ENCODE measurements at regions of chr12 and their contacts with region 1.

Region 1: DNA sequence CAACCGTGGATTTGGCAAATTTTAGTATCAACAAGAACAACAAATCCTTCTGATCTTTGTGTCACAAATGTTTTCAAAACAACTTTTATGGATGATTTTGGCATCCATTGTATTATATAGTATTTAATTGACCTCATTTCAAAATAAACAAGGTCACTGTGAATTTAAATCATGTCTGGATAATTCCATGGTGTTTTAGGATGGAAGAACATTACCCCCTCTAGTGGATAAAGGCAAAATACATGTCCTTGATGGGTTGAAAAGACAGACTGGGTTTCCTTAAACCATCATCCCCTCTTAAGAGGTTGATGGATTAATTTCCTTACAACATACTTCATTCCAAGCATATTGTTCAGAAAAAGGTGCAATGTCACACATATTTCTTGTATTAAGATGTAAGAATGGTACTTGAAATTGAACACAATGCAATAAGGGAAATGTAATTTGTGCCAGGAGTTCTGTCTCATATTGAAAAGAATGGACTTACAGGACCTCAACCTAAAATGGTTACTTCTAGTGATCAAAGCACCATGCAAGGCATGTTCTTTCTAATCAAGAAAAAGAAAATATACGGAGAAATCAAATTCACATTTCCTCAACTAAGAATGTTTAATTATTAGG is 352.0 kb downstream of the BCAT1 start:
- DNase-seq: no peak
- ATAC-seq: no peak
- H3K4me3 ChIP-seq: no peak overlapping the region
- H3K27ac ChIP-seq: no peak overlapping the region
- H3K4me1 ChIP-seq: peaks cover 0 to 2% of the 10 kb centered on the region in 2 donors
- H3K27me3 ChIP-seq: no peaks in the 10 kb centered on the region

Region 2: DNA sequence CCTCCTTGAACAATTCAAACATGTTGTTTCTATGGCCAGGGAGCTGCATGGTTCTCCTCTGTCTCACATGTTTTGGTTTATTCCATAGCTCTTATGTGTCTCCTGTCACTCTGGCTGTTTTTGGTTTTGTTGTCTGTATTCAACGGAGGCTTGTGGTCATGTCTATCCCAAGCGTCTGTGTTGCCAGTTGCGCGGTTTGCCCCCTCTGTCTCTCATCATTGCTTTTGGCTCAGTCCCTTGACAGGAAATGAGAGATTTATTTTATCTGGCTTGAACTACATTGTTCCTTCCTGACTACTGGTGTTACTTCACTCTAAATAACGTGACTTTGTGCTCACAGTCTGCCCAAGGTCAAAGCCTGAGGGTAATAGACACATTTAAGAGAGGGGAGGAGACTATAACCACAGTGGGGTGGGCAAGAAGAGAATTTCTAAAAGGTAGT is 551.0 kb before region 1 on chr12:
- intact Hi-C with region 1: loop called in 1 of 2 experiments (anchors 10 kb)
- DNase-seq: peak in 1 of 2 donors; percentile 45
- ATAC-seq: peak; percentile 79
- H3K4me3 ChIP-seq: no peak overlapping the region
- H3K27ac ChIP-seq: no peak overlapping the region
- H3K4me1 ChIP-seq: peaks cover 0 to 3% of the 10 kb centered on the region in 2 donors
- H3K27me3 ChIP-seq: no peaks in the 10 kb centered on the region

Region 3: GRCh38 chr12:24109381-24110039 is 487.4 kb before region 1 on chr12:
- intact Hi-C with region 1: loop called (anchors 10 kb)
- DNase-seq: no peak
- ATAC-seq: no peak
- H3K4me3 ChIP-seq: no peak overlapping the region
- H3K27ac ChIP-seq: no peak overlapping the region
- H3K4me1 ChIP-seq: no peaks in the 10 kb centered on the region
- H3K27me3 ChIP-seq: no peaks in the 10 kb centered on the region

Region 4: DNA sequence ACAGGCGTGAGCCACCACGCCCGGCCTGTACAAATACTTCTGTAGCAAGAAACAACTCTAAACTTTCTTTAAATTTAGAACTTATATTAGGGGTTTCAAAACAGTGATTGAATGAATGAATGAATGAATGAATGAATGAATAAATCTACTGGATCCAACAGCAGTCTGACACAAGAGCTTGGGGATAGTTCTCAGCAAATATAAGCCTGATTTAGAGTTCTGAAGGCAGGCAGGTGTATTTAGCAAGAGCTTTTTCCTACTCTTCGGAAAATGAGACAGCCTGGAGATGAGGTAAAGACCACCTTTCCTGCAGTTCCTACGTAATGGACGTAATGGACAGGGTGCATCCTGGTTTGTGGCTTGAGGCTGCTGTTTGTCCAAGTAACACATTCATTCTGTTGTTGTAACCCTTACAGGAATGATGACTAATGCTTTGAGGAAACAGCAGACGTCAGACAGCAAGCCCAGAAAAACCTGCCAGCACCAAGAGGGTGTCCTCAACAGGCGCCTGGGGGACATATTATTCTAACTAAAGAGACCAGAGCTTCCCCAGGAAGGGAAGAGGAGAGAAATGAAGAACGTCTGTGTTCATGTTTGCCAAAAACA is 370.0 kb before region 1 on chr12:
- intact Hi-C with region 1: loop called in 1 of 2 experiments (anchors 10 kb)
- DNase-seq: peak in 1 of 2 donors; percentile 59
- ATAC-seq: peak; percentile 73
- H3K4me3 ChIP-seq: no peak overlapping the region
- H3K27ac ChIP-seq: peak overlapping the region in 1 of 2 donors; percentile 51
- H3K4me1 ChIP-seq: peaks cover 2 to 8% of the 10 kb centered on the region in 2 donors
- H3K27me3 ChIP-seq: no peaks in the 10 kb centered on the region

Region 5: GRCh38 chr12:24404086-24404815 is 192.6 kb before region 1 on chr12:
- intact Hi-C with region 1: no loop called
- DNase-seq: no peak
- ATAC-seq: no peak
- H3K4me3 ChIP-seq: no peak overlapping the region
- H3K27ac ChIP-seq: no peak overlapping the region
- H3K4me1 ChIP-seq: peaks cover 0 to 2% of the 10 kb centered on the region in 2 donors
- H3K27me3 ChIP-seq: no peaks in the 10 kb centered on the region

Region 6: DNA sequence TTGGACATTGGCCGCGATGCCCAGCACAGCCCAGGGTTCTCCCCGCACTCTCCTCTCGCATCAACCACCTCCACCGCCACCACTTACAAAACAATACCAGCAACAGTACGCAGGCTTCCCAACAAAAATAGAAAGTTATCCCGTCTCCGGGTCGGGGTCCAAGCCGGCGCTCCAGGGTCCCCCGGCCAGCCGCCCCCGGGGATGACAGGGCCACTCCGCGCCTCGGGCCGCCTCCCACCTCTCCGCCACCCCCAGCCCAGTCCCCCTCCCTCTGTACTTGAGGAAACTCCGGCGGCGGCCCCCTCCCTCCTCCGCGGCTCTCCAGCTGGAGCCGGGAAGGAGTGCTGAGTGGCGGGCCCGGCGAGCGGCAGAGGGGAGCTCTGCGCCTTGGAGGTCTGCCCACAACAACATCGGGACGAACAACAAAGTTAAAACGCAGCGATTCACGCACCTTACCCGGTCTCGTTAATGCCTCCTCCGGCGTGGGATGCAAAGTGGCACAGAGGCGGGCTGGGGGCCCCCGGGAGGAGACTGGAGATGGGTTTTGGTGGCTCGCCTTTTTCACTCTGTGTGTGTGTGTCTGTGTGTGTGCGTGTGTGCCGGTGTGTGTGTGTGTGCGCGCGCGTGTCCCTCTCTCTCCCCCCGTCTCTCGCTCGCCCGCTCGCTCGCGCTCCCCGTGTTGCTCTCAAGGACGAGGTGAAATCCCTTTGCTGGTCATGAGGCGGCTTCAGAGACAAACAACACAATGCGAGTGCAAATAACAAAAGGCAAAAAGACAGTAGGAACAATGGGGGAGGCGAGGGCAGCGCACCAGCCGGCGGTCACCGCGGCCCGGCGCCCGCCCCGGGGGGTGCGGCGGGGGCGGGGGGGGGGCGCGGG is 34.8 kb before region 1 on chr12:
- intact Hi-C with region 1: loop called in 1 of 2 experiments (anchors 2 kb)
- DNase-seq: peak; percentile 85 to 90
- ATAC-seq: peak; percentile 88
- H3K4me3 ChIP-seq: peak overlapping the region; percentile 90 to 93
- H3K27ac ChIP-seq: peak overlapping the region; percentile 80 to 90
- H3K4me1 ChIP-seq: peaks cover 0 to 2% of the 10 kb centered on the region in 2 donors
- H3K27me3 ChIP-seq: no peaks in the 10 kb centered on the region

Region 7: GRCh38 chr12:24728366-24728765 is 131.5 kb after region 1 on chr12:
- intact Hi-C with region 1: loop called in 1 of 2 experiments (anchors 10 kb)
- DNase-seq: no peak
- ATAC-seq: no peak
- H3K4me3 ChIP-seq: no peak overlapping the region
- H3K27ac ChIP-seq: no peak overlapping the region
- H3K4me1 ChIP-seq: no peaks in the 10 kb centered on the region
- H3K27me3 ChIP-seq: no peaks in the 10 kb centered on the region